Heart left ventricle (tissue), 16 donors: ENCODE measurements at regions of chr5 and their contacts with region 1.

Region 1: GRCh38 chr5:91110686-91111085 is 272.4 kb downstream of the ARRDC3 start:
- DNase-seq: peak in 1 of 5 donors; percentile 28
- ATAC-seq: peak; percentile 80 to 91 (median 85)
- H3K4me3 ChIP-seq: no peak overlapping the region
- H3K27ac ChIP-seq: peak overlapping the region; percentile 5 to 78 (median 54)
- H3K4me1 ChIP-seq: peaks cover 0 to 39% (median 25%) of the 10 kb centered on the region in 12 donors
- H3K27me3 ChIP-seq: no peaks in the 10 kb centered on the region
- CTCF ChIP-seq: no peak
- POLR2A ChIP-seq: no peak

Region 2: DNA sequence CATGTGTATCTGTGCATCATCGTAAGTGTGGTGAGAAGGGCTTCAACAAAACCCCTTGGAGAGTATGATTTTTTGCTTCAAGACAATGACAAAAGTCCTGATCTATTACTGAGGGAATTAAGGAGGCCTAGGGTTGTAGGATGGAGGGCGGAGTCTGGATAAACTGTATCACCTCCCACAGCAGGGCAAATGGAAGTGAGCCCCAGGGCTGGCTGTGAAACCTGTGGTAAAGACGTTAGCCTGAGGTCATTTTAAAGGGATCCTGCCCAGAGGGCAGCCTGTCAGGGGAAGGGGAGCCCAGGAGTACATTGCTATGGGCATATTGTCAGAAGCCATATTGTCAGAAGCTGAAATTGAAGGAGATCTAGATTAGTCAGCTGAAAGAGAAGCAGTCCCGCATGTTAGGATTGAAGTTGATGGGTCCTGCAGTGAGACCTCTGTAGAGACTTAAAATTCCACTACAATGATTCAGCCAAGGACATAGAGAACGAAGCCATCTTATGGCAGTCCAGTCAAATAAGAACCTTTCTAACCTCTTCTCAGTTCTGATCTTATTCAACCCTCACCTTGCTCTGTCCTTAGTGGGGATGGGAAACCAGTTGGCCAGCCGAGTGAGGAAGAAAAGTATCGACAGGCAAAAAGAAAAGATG is 525.2 kb before region 1 on chr5:
- intact Hi-C with region 1: no loop called
- DNase-seq: no peak
- ATAC-seq: no peak
- H3K4me3 ChIP-seq: no peak overlapping the region
- H3K27ac ChIP-seq: no peak overlapping the region
- H3K4me1 ChIP-seq: no peaks in the 10 kb centered on the region
- H3K27me3 ChIP-seq: peaks cover 0 to 25% (median 0%) of the 10 kb centered on the region in 9 donors
- CTCF ChIP-seq: no peak
- POLR2A ChIP-seq: no peak

Region 3: GRCh38 chr5:91070761-91071550 is 39.7 kb before region 1 on chr5:
- intact Hi-C with region 1: no loop called
- DNase-seq: no peak
- ATAC-seq: no peak
- H3K4me3 ChIP-seq: no peak overlapping the region
- H3K27ac ChIP-seq: no peak overlapping the region
- H3K4me1 ChIP-seq: no peaks in the 10 kb centered on the region
- H3K27me3 ChIP-seq: no peaks in the 10 kb centered on the region
- CTCF ChIP-seq: no peak
- POLR2A ChIP-seq: no peak

Region 4: GRCh38 chr5:91151947-91152346 is 41.3 kb after region 1 on chr5:
- intact Hi-C with region 1: loop called in 1 of 10 experiments (anchors 5 kb)
- DNase-seq: peak in 4 of 5 donors; percentile 37 to 77 (median 56)
- ATAC-seq: peak; percentile 92 to 99 (median 94)
- H3K4me3 ChIP-seq: no peak overlapping the region
- H3K27ac ChIP-seq: no peak overlapping the region
- H3K4me1 ChIP-seq: peaks cover 0 to 20% (median 3%) of the 10 kb centered on the region in 12 donors
- H3K27me3 ChIP-seq: no peaks in the 10 kb centered on the region
- CTCF ChIP-seq: no peak
- POLR2A ChIP-seq: no peak

Region 5: DNA sequence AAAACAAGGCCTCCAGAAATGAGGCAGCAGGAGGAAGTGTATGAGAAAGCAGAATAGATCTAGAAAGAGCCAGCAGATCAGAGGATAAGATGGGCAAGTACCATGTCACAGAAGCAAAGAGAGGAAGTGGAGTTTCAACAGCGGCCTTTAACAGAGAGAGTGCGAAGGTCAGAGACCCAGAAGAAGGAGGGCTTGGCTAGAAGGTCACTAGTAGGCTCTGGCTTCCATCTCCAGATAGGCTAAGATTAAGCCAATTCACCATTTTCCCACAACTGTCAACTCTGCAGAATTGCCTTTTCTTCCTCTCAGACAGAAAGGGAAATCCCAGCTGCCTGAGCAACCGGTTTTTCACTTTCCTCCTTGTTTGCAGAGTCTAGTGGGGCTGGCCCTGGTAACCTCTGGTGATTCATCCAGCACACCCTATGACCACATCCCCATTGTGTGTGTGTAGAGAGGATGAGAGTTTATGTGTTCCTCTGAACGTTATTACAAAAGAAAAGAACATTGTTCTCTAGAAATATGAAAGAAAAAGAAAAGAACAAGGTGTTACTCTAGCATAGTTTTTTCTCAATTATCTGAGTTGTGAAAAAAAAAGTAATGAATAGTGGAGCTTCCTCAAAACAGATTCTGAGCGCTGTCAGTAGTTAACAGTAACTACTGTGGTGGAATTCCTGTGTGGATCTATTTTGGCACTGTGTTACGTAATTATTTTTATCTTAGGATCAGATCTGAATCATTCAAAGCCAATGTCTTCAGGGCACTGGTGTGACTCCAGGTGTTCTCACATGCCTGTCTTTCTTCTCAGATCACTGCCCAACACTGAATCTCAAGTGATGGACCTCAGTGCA is 52.1 kb after region 1 on chr5:
- intact Hi-C with region 1: loop called in 2 of 10 experiments (anchors 10 kb)
- DNase-seq: peak in 4 of 5 donors; percentile 53 to 72 (median 65)
- ATAC-seq: peak; percentile 89 to 99 (median 98)
- H3K4me3 ChIP-seq: no peak overlapping the region
- H3K27ac ChIP-seq: peak overlapping the region; percentile 0 to 88 (median 46)
- H3K4me1 ChIP-seq: peaks cover 0 to 34% (median 2%) of the 10 kb centered on the region in 12 donors
- H3K27me3 ChIP-seq: no peaks in the 10 kb centered on the region
- CTCF ChIP-seq: no peak
- POLR2A ChIP-seq: no peak

Region 6: GRCh38 chr5:91170266-91170665 is 59.6 kb after region 1 on chr5:
- intact Hi-C with region 1: loop called in 3 of 10 experiments (anchors 10 kb)
- DNase-seq: no peak
- ATAC-seq: no peak
- H3K4me3 ChIP-seq: no peak overlapping the region
- H3K27ac ChIP-seq: peak overlapping the region in 1 of 12 donors; percentile 28
- H3K4me1 ChIP-seq: peaks cover 0 to 4% (median 0%) of the 10 kb centered on the region in 12 donors
- H3K27me3 ChIP-seq: no peaks in the 10 kb centered on the region
- CTCF ChIP-seq: no peak
- POLR2A ChIP-seq: no peak

Region 7: GRCh38 chr5:91189480-91190300 is 79.0 kb after region 1 on chr5:
- intact Hi-C with region 1: loop called in 1 of 10 experiments (anchors 10 kb)
- DNase-seq: peak in 4 of 5 donors; percentile 31 to 53 (median 46)
- ATAC-seq: peak in 3 of 4 donors; percentile 87 to 93 (median 92)
- H3K4me3 ChIP-seq: peak overlapping the region in 9 of 12 donors; percentile 7 to 49 (median 31)
- H3K27ac ChIP-seq: peak overlapping the region in 11 of 12 donors; percentile 1 to 77 (median 56)
- H3K4me1 ChIP-seq: peaks cover 0 to 18% (median 0%) of the 10 kb centered on the region in 12 donors
- H3K27me3 ChIP-seq: no peaks in the 10 kb centered on the region
- CTCF ChIP-seq: no peak
- POLR2A ChIP-seq: no peak

Region 8: DNA sequence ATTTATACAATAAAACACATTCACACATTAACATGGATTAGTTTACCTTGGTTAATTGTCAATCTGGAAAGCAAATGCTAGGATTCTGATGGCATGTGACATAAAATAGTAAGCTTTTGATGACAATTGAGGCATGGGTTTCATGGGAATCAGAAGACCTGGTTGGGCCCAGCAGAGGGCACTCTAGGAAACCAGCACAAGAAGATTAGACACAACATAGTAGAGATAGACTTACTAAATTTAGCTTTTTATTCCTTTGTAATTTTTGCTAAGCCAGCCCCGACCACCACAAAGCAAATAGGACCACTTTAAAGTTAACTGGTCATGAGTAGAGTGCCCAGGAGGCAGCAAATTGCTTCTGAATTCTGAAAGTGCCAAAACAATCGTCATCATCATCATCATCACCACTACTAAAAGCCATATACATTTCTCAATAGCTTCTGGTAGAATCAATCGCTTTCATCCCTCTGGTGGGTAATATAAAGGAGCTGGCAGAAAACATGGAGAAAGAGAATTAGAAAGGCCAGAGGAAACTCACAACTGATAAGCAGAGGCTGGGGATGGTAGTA is 109.2 kb after region 1 on chr5:
- intact Hi-C with region 1: loop called in 6 of 10 experiments (anchors 5 to 10 kb)
- DNase-seq: peak in 1 of 5 donors; percentile 26
- ATAC-seq: peak in 2 of 4 donors; percentile 41 to 52
- H3K4me3 ChIP-seq: no peak overlapping the region
- H3K27ac ChIP-seq: peak overlapping the region in 4 of 12 donors; percentile 6 to 92 (median 35)
- H3K4me1 ChIP-seq: peaks cover 0 to 16% (median 0%) of the 10 kb centered on the region in 12 donors
- H3K27me3 ChIP-seq: no peaks in the 10 kb centered on the region
- CTCF ChIP-seq: peak in 10 of 12 donors; percentile 18 to 54 (median 33)
- POLR2A ChIP-seq: no peak

Region 9: GRCh38 chr5:91280362-91281269 is 169.9 kb after region 1 on chr5:
- intact Hi-C with region 1: loop called in 4 of 10 experiments (anchors 10 kb)
- DNase-seq: peak; percentile 94 to 97 (median 95)
- ATAC-seq: peak; percentile 95 to 98 (median 97)
- H3K4me3 ChIP-seq: peak overlapping the region; percentile 35 to 73 (median 62)
- H3K27ac ChIP-seq: peak overlapping the region; percentile 72 to 97 (median 93)
- H3K4me1 ChIP-seq: peaks cover 0 to 29% (median 8%) of the 10 kb centered on the region in 12 donors
- H3K27me3 ChIP-seq: no peaks in the 10 kb centered on the region
- CTCF ChIP-seq: peak in 2 of 12 donors; percentile 6 to 7
- POLR2A ChIP-seq: peak in 1 of 2 donors; percentile 50